Testis (tissue), 5 donors: ENCODE measurements at regions of chr1 and their contacts with region 1.

Region 1: DNA sequence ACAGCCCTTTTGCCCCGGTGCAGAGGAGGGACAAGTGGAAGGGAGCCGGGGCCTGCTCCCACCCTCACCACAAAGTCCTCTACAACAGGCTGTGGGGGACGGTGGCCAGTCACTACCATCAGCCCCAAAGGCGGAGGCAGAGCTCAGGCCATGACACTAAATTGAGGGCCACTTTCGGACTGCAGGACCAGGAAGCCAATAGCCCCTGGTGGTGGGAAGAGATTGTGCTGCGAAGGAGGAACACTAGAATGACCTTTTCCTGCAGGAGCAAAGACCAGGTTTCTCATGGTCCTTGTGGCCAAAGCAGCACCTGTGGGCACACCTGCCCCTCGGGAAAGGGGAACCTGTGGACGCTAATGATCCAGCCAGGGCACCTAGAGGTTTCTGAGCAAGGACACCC is 30.3 kb downstream of the ACTA1 start:
- DNase-seq: no peak
- H3K4me3 ChIP-seq: no peak overlapping the region
- H3K27ac ChIP-seq: no peak overlapping the region
- H3K4me1 ChIP-seq: peaks cover 13% of the 10 kb centered on the region
- H3K27me3 ChIP-seq: no peaks in the 10 kb centered on the region
- CTCF ChIP-seq: no peak
- POLR2A ChIP-seq: no peak

Region 2: DNA sequence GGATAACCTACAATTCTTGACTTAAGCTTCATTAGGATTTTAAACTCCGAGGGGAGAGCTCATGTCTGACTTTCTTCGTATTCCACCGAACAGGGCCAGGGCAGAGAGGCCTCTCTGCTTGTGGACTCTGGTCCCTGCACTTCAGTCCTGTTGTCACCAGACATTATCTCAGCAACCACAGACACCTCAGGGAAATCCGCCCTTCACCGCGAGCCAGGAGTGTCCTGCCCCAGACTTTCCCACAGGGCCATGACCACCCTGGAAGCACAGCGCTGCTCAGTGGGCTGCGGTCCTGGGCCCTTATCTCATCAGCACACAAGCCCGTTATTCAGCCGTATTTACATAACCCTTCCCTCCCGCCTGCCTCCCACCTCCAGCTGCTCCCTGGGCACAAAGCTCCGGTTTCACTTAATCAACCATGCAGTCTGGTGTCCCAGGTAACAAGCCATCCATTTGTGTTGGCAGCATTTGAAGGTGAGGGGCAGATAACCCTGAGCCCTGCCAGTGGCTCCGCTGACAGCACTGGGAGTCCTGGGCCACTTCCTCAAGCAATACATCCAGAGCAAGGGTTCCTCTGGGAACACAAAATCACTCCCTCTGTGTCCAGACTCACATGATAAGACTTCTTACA is 255.4 kb before region 1 on chr1:
- intact Hi-C with region 1: loop called (anchors 5 kb)
- DNase-seq: peak; percentile 58
- H3K4me3 ChIP-seq: no peak overlapping the region
- H3K27ac ChIP-seq: no peak overlapping the region
- H3K4me1 ChIP-seq: peaks cover 10% of the 10 kb centered on the region
- H3K27me3 ChIP-seq: no peaks in the 10 kb centered on the region
- CTCF ChIP-seq: no peak
- POLR2A ChIP-seq: no peak

Region 3: DNA sequence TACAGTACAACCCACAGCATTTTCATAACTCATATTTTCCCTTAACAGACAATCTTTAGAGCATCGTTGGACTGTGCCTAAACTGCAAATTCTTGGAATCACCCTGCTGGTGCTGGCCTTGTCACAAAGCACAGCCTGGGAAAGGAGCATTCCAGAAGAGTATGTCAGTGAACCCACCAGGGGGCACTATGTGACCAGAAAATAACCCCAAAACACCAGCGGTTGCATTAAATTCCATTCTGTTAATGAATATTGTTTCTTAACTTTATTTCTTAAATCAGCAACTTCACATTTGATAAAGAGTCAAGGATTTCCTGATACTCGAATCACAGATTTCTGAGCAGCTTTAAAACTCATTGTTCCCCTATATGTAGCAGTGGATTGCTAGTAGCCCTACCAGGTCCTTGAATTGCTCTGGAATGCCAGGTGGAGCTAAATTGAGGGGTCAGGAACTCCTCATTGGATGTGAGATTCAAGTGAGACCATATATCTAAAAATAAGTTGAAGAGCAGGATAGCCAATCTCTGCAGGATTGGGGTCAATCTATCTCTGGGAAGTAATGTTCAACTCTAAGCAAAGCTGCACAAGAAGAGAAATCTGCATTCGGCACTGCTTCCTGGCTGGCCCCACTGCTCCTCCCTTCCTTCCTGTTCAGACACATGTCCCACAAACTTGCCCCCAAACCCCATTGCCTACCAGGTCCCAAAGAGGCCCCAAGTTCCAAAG is 145.4 kb before region 1 on chr1:
- intact Hi-C with region 1: no loop called
- DNase-seq: peak; percentile 82
- H3K4me3 ChIP-seq: no peak overlapping the region
- H3K27ac ChIP-seq: no peak overlapping the region
- H3K4me1 ChIP-seq: peaks cover 5% of the 10 kb centered on the region
- H3K27me3 ChIP-seq: no peaks in the 10 kb centered on the region
- CTCF ChIP-seq: peak; percentile 70 to 90 (median 86)
- POLR2A ChIP-seq: no peak

Region 4: GRCh38 chr1:229538945-229539344 is 135.4 kb after region 1 on chr1:
- intact Hi-C with region 1: no loop called
- DNase-seq: no peak
- H3K4me3 ChIP-seq: no peak overlapping the region
- H3K27ac ChIP-seq: no peak overlapping the region
- H3K4me1 ChIP-seq: no peaks in the 10 kb centered on the region
- H3K27me3 ChIP-seq: no peaks in the 10 kb centered on the region
- CTCF ChIP-seq: no peak
- POLR2A ChIP-seq: no peak